MCF 10A (cell line): ENCODE measurements at regions of chr4 and their contacts with region 1.

Region 1: DNA sequence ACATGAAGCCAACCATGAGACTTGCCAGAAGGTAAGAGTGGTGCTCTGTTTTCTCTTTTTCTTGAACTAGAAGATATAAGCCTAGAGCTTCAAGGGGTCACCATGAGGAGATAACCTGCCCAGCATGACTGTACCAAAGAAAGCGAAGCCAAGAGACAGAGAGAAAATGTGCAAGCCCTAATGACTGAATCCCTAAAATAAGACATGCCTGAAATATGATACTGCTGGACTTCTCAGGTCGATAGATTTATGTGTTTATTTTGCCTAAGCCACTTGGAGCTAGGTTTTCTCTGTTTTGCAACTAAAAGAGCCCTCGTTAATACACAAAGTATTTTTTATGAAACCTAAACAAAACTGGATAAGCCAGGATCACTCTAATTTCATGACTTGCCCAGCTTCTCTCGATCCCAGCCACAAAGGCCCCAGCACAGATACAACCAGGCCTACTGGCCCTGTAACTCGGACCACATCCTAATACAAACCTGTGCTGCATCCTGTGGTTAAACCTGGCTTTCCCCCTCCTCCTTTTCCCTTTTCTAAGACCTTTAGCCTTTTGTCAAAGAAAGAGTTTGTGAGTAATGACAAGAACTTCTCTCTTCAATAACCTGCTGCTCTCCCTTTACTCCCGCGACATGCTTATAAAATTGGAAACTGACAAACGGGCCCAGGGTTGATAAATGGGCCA is 185.8 kb downstream of the APBB2 start:
- DNase-seq: no peak
- H3K4me3 Mint-ChIP-seq: no peak overlapping the region
- H3K27ac Mint-ChIP-seq: no peak overlapping the region
- H3K4me1 Mint-ChIP-seq: no peaks in the 10 kb centered on the region
- H3K27me3 Mint-ChIP-seq: no peaks in the 10 kb centered on the region
- CTCF ChIP-seq: no peak

Region 2: DNA sequence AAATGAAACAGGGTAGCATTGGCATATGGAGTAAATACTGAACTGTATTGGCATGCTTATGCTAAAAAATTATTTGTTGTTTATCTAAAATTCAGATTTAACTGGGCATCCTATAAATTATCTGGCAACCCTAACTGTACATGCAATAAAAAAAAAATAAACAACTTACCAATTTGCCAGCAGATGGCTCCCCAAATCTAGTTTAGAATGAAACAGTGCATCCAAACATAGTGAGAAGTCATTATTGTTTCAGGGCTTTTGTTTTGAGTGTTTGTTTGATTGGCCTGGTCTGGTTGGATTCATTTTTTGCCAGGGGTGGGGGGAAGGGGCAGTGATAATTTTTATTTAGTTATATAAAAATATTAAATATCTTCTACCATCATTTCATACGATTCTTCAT is 291.6 kb before region 1 on chr4:
- CTCF ChIA-PET with region 1: no interaction called
- POLR2A ChIA-PET with region 1: no interaction called
- intact Hi-C with region 1: no loop called
- DNase-seq: peak; percentile 52
- H3K4me3 Mint-ChIP-seq: no peak overlapping the region
- H3K27ac Mint-ChIP-seq: no peak overlapping the region
- H3K4me1 Mint-ChIP-seq: peaks cover 6% of the 10 kb centered on the region
- H3K27me3 Mint-ChIP-seq: no peaks in the 10 kb centered on the region
- CTCF ChIP-seq: peak; percentile 39

Region 3: GRCh38 chr4:41044165-41044564 is 15.6 kb after region 1 on chr4:
- CTCF ChIA-PET with region 1: interaction called, 5 read pairs
- POLR2A ChIA-PET with region 1: interaction called, 10 read pairs
- intact Hi-C with region 1: no loop called
- DNase-seq: no peak
- H3K4me3 Mint-ChIP-seq: no peak overlapping the region
- H3K27ac Mint-ChIP-seq: no peak overlapping the region
- H3K4me1 Mint-ChIP-seq: no peaks in the 10 kb centered on the region
- H3K27me3 Mint-ChIP-seq: no peaks in the 10 kb centered on the region
- CTCF ChIP-seq: no peak